GM12878 (cell line): ENCODE measurements at regions of chr18 and their contacts with region 1.

Region 1: GRCh38 chr18:36302676-36303075 is 5.2 kb downstream of the FHOD3 start:
- DNase-seq: no peak
- ATAC-seq: no peak
- H3K4me3 ChIP-seq: no peak overlapping the region
- H3K27ac ChIP-seq: no peak overlapping the region
- H3K4me1 ChIP-seq: no peaks in the 10 kb centered on the region
- H3K27me3 ChIP-seq: peaks cover 0 to 6% of the 10 kb centered on the region in 2 experiments; a peak in 2 of 4 replicates
- CTCF ChIP-seq: no peak
- EP300 ChIP-seq: no peak
- POLR2A ChIP-seq: no peak
- RAD21 ChIP-seq: no peak

Region 2: DNA sequence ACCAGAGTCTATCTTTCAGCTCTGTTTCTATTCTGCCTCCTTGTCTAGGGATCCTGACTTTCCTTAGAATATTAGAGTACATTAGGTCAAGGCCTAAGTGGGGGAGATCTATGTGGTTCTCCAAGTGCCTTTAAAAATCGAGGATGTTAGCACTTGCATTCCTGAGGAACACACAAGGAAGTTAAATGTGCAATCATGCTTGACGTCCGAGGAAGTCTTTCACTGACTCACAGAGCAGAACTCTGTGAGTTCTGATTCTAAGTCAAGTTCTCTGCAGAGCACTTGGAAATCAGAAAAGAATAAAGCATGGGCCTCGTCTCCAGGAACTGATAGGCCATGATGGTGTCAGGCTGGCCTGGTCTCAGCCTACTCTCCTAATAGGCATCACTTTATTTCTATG is 12.1 kb after region 1 on chr18:
- CTCF ChIA-PET with region 1: interaction called, 10 read pairs
- POLR2A ChIA-PET with region 1: interaction called, 6 read pairs
- RAD21 ChIA-PET with region 1: interaction called, 24 read pairs
- SMC1A ChIA-PET with region 1: interaction called, 125 read pairs
- in situ Hi-C with region 1: no loop called
- intact Hi-C with region 1: no loop called
- DNase-seq: no peak
- ATAC-seq: peak; percentile 22
- H3K4me3 ChIP-seq: no peak overlapping the region
- H3K27ac ChIP-seq: no peak overlapping the region
- H3K4me1 ChIP-seq: no peaks in the 10 kb centered on the region
- H3K27me3 ChIP-seq: no peaks in the 10 kb centered on the region
- CTCF ChIP-seq: no peak
- EP300 ChIP-seq: no peak
- POLR2A ChIP-seq: no peak
- RAD21 ChIP-seq: no peak

Region 3: GRCh38 chr18:36341944-36342343 is 39.3 kb after region 1 on chr18:
- CTCF ChIA-PET with region 1: interaction called, 10 read pairs
- POLR2A ChIA-PET with region 1: interaction called, 6 read pairs
- RAD21 ChIA-PET with region 1: interaction called, 48 read pairs
- SMC1A ChIA-PET with region 1: interaction called, 33 read pairs
- in situ Hi-C with region 1: no loop called
- intact Hi-C with region 1: no loop called
- DNase-seq: no peak
- ATAC-seq: no peak
- H3K4me3 ChIP-seq: no peak overlapping the region
- H3K27ac ChIP-seq: no peak overlapping the region
- H3K4me1 ChIP-seq: no peaks in the 10 kb centered on the region
- H3K27me3 ChIP-seq: no peaks in the 10 kb centered on the region
- CTCF ChIP-seq: no peak
- EP300 ChIP-seq: no peak
- POLR2A ChIP-seq: no peak
- RAD21 ChIP-seq: no peak

Region 4: DNA sequence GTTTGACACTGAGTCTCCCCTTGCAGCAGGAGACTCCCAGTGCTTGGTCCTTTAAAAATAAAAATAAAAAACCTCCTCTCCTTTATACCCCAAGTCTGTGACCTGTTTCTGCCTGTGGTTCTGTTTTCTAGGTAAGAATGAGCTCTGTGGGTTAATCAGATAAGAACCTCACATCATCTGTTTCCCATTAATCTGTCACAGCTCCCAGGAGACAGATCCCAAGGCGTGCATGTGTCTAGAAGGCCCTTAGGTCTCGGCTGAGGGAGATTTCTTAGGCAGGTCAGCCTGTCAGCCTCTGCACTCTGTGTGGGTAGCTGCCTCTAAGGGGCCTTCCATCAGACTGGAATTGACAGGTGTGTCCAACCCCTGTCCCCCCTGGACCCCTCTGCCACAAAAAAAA is 75.5 kb after region 1 on chr18:
- CTCF ChIA-PET with region 1: interaction called, 4 read pairs
- POLR2A ChIA-PET with region 1: interaction called, 3 read pairs
- RAD21 ChIA-PET with region 1: interaction called, 203 read pairs
- SMC1A ChIA-PET with region 1: interaction called, 6 read pairs
- in situ Hi-C with region 1: no loop called
- intact Hi-C with region 1: no loop called
- DNase-seq: no peak
- ATAC-seq: no peak
- H3K4me3 ChIP-seq: no peak overlapping the region
- H3K27ac ChIP-seq: no peak overlapping the region
- H3K4me1 ChIP-seq: no peaks in the 10 kb centered on the region; the same call in 1 of the 2 replicates
- H3K27me3 ChIP-seq: no peaks in the 10 kb centered on the region
- CTCF ChIP-seq: no peak
- EP300 ChIP-seq: no peak
- POLR2A ChIP-seq: no peak
- RAD21 ChIP-seq: no peak

Region 5: DNA sequence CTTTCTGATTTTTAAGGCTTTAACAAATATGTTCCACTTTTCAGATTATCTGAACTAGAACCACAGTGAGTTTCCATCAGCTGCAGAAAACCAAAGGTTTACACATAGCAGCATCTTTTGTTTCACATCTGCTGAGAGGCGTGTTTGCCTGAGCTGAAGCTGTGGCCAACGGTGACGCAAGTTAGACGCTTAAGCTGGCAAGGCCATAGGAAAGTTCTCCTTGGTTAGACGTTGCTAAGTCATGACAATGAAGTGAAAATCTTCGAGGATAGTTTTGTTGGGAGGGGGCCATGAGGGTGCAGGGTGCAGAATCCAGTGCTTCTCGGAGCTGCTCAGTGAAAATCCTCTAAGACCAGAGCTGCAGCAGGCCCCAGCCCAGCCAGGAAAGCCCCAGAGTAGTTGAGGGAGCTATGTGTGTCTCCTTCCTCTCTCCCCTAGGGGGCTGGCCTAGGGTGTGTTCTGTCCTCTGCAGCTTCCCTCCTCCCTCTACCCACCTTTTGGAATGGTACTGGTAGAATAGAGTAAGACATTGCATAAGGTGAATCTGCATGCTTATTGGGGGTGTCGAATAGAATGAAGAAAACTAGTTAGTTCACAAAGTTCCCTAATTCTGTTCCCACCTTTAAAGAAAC is 100.2 kb after region 1 on chr18:
- CTCF ChIA-PET with region 1: interaction called, 4 read pairs
- POLR2A ChIA-PET with region 1: interaction called, 7 read pairs
- RAD21 ChIA-PET with region 1: interaction called, 6 read pairs
- SMC1A ChIA-PET with region 1: interaction called, 11 read pairs
- in situ Hi-C with region 1: no loop called
- intact Hi-C with region 1: no loop called
- DNase-seq: no peak
- ATAC-seq: peak; percentile 70
- H3K4me3 ChIP-seq: no peak overlapping the region
- H3K27ac ChIP-seq: no peak overlapping the region
- H3K4me1 ChIP-seq: no peaks in the 10 kb centered on the region
- H3K27me3 ChIP-seq: no peaks in the 10 kb centered on the region
- CTCF ChIP-seq: peak in 2 of 3 experiments; percentile 3 to 25; a peak in 3 of 6 replicates
- EP300 ChIP-seq: no peak
- POLR2A ChIP-seq: no peak
- RAD21 ChIP-seq: no peak